ENCODE measurements at regions of chr10 and their contacts with region 1.

Region 1: GRCh38 chr10:73159038-73159648 is 8.7 kb downstream of the ECD start:
- DNase-seq: peak; percentile 66
- ATAC-seq: peak; percentile 60
- H3K4me3 Mint-ChIP-seq: no peak overlapping the region
- H3K27ac Mint-ChIP-seq: no peak overlapping the region
- H3K4me1 Mint-ChIP-seq: peaks cover 33% of the 10 kb centered on the region
- H3K27me3 Mint-ChIP-seq: no peaks in the 10 kb centered on the region

Region 2: GRCh38 chr10:72976886-72977285 is 182.3 kb before region 1 on chr10:
- CTCF ChIA-PET with region 1: no interaction called
- DNase-seq: no peak
- ATAC-seq: no peak
- H3K4me3 Mint-ChIP-seq: no peak overlapping the region
- H3K27ac Mint-ChIP-seq: no peak overlapping the region
- H3K4me1 Mint-ChIP-seq: no peaks in the 10 kb centered on the region
- H3K27me3 Mint-ChIP-seq: peaks cover 21% of the 10 kb centered on the region

Region 3: GRCh38 chr10:73110345-73110849 is 48.7 kb before region 1 on chr10 and contains the start of gene NUDT13:
- CTCF ChIA-PET with region 1: interaction called, 11 read pairs
- DNase-seq: peak; percentile 63
- ATAC-seq: peak; percentile 74
- H3K4me3 Mint-ChIP-seq: peak within 1 kb of the TSS; percentile 81
- H3K27ac Mint-ChIP-seq: peak within 1 kb of the TSS; percentile 86
- H3K4me1 Mint-ChIP-seq: peaks cover 14% of the 10 kb centered on the region
- H3K27me3 Mint-ChIP-seq: no peaks in the 10 kb centered on the region
- total RNA-seq, gene NUDT13: 1.2 TPM

Region 4: DNA sequence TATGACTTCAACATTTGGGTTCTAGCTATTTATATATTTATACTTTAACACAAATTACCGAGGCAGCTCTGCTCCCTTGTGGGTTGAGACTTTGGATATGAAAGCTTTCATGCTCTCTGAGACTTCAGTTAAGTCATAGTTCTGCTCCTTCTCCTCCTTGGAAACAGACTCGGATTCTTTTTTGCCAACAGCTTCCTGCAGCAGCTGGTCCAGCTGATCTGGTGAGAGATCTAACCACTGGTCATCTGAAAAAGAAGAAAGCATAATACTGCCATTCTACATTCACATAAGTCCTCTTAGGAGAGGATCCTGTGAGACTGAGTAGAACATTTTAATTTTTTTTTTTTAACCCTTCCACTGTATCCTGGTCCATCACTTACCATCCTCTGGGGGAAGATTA is 19.9 kb before region 1 on chr10:
- CTCF ChIA-PET with region 1: interaction called, 15 read pairs
- DNase-seq: no peak
- ATAC-seq: no peak
- H3K4me3 Mint-ChIP-seq: no peak overlapping the region
- H3K27ac Mint-ChIP-seq: no peak overlapping the region
- H3K4me1 Mint-ChIP-seq: peaks cover 6% of the 10 kb centered on the region
- H3K27me3 Mint-ChIP-seq: no peaks in the 10 kb centered on the region

Region 5: DNA sequence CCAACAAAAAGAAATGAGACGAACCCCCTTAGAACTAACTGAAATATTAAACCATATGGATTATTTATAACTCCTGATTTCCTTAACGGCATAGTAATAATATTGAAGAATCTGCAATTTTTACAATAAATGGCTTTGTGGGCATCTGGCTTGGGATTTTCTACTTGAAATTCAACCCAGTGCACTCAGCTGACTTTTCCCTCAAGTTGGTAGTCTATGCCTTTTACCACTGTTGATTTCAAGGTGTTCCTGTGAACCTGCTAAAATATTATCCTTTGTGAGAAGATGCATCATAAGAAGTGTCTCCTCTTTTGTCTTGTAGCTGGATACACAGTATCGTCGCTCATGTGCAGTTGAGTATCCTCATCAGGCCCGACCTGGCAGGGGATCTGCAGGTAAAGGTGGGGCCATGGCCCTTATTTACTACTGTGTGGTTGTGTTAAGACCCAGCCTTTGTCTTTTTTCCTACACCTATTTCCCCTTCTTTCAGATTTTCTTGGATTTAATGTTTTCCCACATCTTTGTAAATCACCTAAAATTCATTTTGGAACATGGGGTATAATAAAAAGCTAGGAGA is 79.9 kb after region 1 on chr10:
- CTCF ChIA-PET with region 1: no interaction called
- DNase-seq: no peak
- ATAC-seq: no peak
- H3K4me3 Mint-ChIP-seq: no peak overlapping the region
- H3K27ac Mint-ChIP-seq: no peak overlapping the region
- H3K4me1 Mint-ChIP-seq: peaks cover 25% of the 10 kb centered on the region
- H3K27me3 Mint-ChIP-seq: no peaks in the 10 kb centered on the region

Region 6: DNA sequence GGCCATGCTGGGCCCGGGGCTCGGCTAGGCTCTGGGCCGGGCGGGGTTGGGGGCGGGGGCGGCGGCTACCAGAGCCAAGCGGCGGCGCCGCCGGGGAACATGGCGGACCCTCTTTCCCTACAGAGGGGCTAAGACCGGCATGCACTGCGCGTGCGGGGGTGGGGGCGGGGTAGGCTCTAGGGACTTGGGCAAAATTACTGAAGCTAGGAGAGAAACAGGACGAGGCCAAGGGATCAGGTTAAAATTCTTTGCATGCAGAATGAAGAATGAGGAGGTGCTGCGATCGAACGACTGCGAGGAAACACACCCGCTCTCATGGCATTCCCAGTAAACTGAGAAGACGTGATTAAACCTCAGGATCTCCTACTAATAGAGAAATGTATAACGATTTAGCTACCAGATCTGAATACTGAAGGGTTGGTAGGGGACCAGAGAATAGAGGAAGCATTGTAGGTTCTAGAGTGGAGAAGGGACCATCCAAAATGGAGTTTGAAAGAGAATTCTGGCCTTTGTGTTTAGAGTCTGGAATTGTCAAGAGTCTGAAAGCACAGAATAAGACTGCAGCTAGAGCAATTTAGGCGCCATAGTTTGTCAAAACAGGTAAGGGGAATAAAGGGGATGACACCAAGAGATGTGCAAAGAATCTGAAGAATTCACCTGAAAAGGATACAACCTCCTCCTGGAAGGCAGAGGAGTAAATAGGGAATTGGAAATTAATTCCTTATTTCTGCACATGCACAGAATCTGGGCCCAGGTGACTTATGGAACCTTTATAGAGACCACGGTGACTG is 336.9 kb after region 1 on chr10 and contains the start of gene PPP3CB:
- CTCF ChIA-PET with region 1: no interaction called
- DNase-seq: peak; percentile 95
- ATAC-seq: peak; percentile 81
- H3K4me3 Mint-ChIP-seq: peak within 1 kb of the TSS; percentile 85
- H3K27ac Mint-ChIP-seq: peak within 1 kb of the TSS; percentile 97
- H3K4me1 Mint-ChIP-seq: peaks cover 43% of the 10 kb centered on the region
- H3K27me3 Mint-ChIP-seq: no peaks in the 10 kb centered on the region
- total RNA-seq, gene PPP3CB: 48.7 to 49.1 TPM

Region 7: GRCh38 chr10:73552819-73553715 is 393.9 kb after region 1 on chr10:
- CTCF ChIA-PET with region 1: no interaction called
- DNase-seq: no peak
- ATAC-seq: no peak
- H3K4me3 Mint-ChIP-seq: no peak overlapping the region
- H3K27ac Mint-ChIP-seq: no peak overlapping the region
- H3K4me1 Mint-ChIP-seq: no peaks in the 10 kb centered on the region
- H3K27me3 Mint-ChIP-seq: no peaks in the 10 kb centered on the region

Measured in activated CD8-positive, alpha-beta memory T cell treated with anti-CD3 and anti-CD28 coated beads, Interleukin-2, amount 10 ng/mL, durations not matched to agents 7 days and 5 days (primary cell).